ENCODE measurements at regions of chr7 and their contacts with region 1.

Region 1: GRCh38 chr7:28389504-28390395 is 22.6 kb upstream of the CREB5 start:
- DNase-seq: peak; percentile 61
- H3K4me3 Mint-ChIP-seq: peak overlapping the region; percentile 65
- H3K27ac Mint-ChIP-seq: peak overlapping the region; percentile 76
- H3K4me1 Mint-ChIP-seq: peaks cover 12% of the 10 kb centered on the region
- H3K27me3 Mint-ChIP-seq: no peaks in the 10 kb centered on the region
- CTCF ChIP-seq: peak; percentile 61

Region 2: GRCh38 chr7:28179120-28180030 is 210.4 kb before region 1 on chr7:
- CTCF ChIA-PET with region 1: no interaction called
- POLR2A ChIA-PET with region 1: no interaction called
- intact Hi-C with region 1: no loop called
- DNase-seq: peak; percentile 63
- H3K4me3 Mint-ChIP-seq: peak overlapping the region; percentile 74
- H3K27ac Mint-ChIP-seq: peak overlapping the region; percentile 56
- H3K4me1 Mint-ChIP-seq: peaks cover 11% of the 10 kb centered on the region
- H3K27me3 Mint-ChIP-seq: no peaks in the 10 kb centered on the region
- CTCF ChIP-seq: no peak

Region 3: GRCh38 chr7:28408960-28409715 is 19.4 kb after region 1 on chr7:
- CTCF ChIA-PET with region 1: interaction called, 13 read pairs
- POLR2A ChIA-PET with region 1: interaction called, 5 read pairs
- intact Hi-C with region 1: no loop called
- DNase-seq: peak; percentile 95
- H3K4me3 Mint-ChIP-seq: peak overlapping the region; percentile 79
- H3K27ac Mint-ChIP-seq: peak overlapping the region; percentile 90
- H3K4me1 Mint-ChIP-seq: peaks cover 35% of the 10 kb centered on the region
- H3K27me3 Mint-ChIP-seq: peaks cover 13% of the 10 kb centered on the region
- CTCF ChIP-seq: no peak

Region 4: GRCh38 chr7:28536259-28536658 is 146.5 kb after region 1 on chr7:
- CTCF ChIA-PET with region 1: interaction called, 3 read pairs
- POLR2A ChIA-PET with region 1: interaction called, 3 read pairs
- intact Hi-C with region 1: loop called (anchors 1 kb)
- DNase-seq: peak; percentile 51
- H3K4me3 Mint-ChIP-seq: no peak overlapping the region
- H3K27ac Mint-ChIP-seq: no peak overlapping the region
- H3K4me1 Mint-ChIP-seq: peaks cover 12% of the 10 kb centered on the region
- H3K27me3 Mint-ChIP-seq: no peaks in the 10 kb centered on the region
- CTCF ChIP-seq: peak; percentile 38

Region 5: DNA sequence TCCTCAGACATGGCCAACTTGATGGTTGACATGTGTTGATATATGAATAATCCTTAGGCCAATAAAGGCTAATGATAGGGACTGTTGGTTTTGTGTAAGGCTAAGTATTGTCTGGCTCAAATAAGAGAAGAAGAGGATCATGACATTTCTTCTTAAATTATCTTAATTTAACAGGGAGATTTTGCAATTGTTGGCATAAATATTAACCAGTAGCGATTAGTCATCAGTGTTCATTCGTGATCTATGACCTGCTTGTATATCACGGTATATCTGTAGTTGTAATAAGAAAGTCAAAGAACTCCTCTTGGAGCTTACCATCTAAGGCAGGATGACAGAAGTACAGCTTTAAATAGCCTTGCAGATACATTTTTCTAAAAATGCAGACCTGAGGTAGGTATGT is 219.0 kb after region 1 on chr7:
- CTCF ChIA-PET with region 1: interaction called, 16 read pairs
- POLR2A ChIA-PET with region 1: no interaction called
- intact Hi-C with region 1: no loop called
- DNase-seq: peak; percentile 38
- H3K4me3 Mint-ChIP-seq: no peak overlapping the region
- H3K27ac Mint-ChIP-seq: no peak overlapping the region
- H3K4me1 Mint-ChIP-seq: peaks cover 18% of the 10 kb centered on the region
- H3K27me3 Mint-ChIP-seq: no peaks in the 10 kb centered on the region
- CTCF ChIP-seq: no peak

Region 6: DNA sequence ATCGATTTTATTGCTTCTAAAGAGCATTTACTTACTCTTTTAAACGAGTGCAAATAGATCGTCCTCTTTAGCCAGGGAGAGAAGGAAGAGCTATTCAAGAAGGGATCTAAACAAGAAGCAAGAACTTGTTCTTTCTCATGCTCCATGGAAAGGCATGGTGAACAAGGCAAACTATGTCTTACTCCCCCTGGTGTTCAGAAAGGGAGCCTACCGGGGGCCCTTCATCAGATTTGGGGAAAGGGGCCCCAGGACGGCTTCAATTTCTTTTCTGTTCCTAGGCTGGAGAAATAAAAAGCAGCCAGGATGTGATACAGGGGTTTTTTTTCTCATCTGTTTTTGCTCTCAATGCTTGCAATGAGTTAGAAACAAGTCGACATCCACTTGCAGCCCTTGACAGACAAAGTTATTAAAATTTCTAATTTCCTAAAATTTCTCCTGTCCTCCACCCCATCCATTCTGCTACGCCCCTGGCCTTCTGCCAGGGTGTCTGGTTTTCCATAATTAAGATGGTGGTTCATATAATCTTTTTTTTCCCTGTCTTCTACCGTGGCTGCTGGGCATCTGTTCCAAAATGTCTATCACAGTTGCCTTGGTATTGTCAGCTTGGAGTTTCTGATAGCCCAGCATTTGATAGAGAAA is 237.0 kb after region 1 on chr7:
- CTCF ChIA-PET with region 1: interaction called, 23 read pairs
- POLR2A ChIA-PET with region 1: interaction called, 3 read pairs
- intact Hi-C with region 1: loop called (anchors 1 kb)
- DNase-seq: peak; percentile 60
- H3K4me3 Mint-ChIP-seq: no peak overlapping the region
- H3K27ac Mint-ChIP-seq: no peak overlapping the region
- H3K4me1 Mint-ChIP-seq: peaks cover 5% of the 10 kb centered on the region
- H3K27me3 Mint-ChIP-seq: no peaks in the 10 kb centered on the region
- CTCF ChIP-seq: peak; percentile 67

Region 7: DNA sequence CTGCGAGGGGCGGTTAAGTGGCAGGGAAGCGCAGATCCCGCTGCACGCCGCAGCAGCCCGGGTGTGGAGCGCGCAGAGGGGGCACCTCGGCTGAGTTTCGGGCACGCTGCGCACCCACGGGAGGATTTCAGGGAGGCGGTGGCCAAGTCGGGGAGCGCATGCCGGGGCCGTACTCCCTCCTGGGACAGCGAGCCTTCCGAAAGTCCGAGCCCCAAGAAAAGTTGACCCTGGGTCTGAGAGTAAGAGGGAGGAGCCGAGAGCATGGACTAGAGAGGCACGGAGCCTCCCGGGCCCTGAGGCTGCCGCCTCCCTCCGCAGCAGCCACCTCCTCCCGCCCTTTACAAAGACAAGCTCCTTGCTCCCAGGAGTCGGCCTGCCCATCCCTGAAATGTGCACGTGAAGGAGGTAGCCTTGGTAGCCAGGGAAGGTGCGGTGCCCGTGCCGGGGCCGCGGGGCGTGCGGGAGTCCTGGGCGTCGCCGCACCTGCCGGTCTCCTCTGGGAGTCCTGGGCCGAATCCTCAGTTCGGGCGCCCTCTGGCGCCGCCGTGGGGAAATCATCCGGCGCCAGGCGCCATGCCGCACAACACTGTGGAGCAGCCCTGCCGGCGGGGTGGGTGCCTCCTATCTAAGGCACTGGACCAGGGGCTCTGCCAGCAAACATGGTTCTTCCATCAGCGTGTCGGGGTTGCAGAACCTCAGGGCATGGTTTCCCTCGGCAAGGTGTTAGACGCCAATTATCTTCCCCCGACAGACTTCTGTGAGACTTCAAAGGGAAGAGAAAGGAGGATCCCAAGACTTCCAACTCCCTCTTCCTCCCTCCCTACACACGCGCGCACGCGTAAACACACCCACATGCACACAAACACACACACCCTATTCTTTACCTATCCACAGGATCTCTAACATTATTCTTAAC is 464.3 kb after region 1 on chr7:
- CTCF ChIA-PET with region 1: interaction called, 5 read pairs
- POLR2A ChIA-PET with region 1: interaction called, 3 read pairs
- intact Hi-C with region 1: loop called (anchors 1 kb)
- DNase-seq: peak; percentile 74
- H3K4me3 Mint-ChIP-seq: peak overlapping the region; percentile 66
- H3K27ac Mint-ChIP-seq: no peak overlapping the region
- H3K4me1 Mint-ChIP-seq: peaks cover 19% of the 10 kb centered on the region
- H3K27me3 Mint-ChIP-seq: no peaks in the 10 kb centered on the region
- CTCF ChIP-seq: peak; percentile 92